Heart left ventricle (tissue), 16 donors: ENCODE measurements at regions of chr10 and their contacts with region 1.

Region 1: GRCh38 chr10:103888113-103888841 is 29.7 kb downstream of the STN1 start:
- DNase-seq: peak; percentile 62 to 87 (median 71)
- ATAC-seq: peak; percentile 55 to 78 (median 68)
- H3K4me3 ChIP-seq: no peak overlapping the region
- H3K27ac ChIP-seq: peak overlapping the region in 9 of 12 donors; percentile 17 to 65 (median 54)
- H3K4me1 ChIP-seq: peaks cover 0 to 42% (median 26%) of the 10 kb centered on the region in 12 donors
- H3K27me3 ChIP-seq: no peaks in the 10 kb centered on the region
- CTCF ChIP-seq: peak; percentile 69 to 92 (median 84)
- POLR2A ChIP-seq: no peak

Region 2: DNA sequence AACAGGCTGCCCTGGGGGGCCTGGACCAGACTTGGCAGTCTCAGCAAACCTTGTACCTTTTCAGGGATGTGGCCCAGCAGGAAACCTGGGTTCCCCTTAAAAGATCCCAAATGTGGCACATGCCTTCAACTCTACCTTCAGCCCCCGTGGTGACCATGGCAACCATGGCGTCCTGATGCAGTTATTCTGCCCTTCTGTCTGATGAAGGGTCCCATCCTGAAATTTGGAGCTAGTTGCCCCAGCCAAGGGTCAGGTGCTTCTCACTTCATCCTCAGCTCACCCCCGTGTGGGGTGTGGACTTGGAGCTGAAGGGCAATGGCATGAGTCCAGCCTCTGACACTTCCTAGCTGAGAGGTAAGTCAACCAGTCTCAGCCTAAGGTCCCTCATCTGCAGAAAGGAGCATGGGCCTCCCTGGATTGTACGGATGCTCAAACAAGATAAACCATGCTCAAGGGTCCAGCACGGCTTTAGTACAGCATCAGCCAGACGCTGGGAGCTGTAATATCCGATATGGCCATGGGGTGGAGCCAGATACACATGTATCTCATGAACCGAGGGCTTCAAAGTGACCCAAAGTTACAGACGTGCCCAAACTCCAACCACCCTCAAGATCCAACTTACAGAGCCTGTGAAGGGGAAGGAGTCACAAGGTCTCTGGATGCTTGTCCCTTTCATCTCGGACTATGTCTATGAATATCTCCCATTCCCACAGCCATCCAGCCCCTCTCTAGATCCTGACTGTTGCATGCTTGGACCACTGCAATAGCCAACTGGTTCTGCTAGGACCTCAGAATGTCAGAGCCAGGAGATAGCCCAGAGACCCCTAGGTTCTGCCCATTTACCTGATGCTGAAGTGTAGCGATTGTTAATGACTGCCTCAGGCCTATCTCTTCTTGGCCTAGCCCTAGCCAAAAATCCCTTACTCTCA is 175.4 kb before region 1 on chr10:
- intact Hi-C with region 1: loop called in 5 of 10 experiments (anchors 1 to 5 kb)
- DNase-seq: peak; percentile 74 to 80 (median 75)
- ATAC-seq: peak; percentile 63 to 80 (median 79)
- H3K4me3 ChIP-seq: no peak overlapping the region
- H3K27ac ChIP-seq: no peak overlapping the region
- H3K4me1 ChIP-seq: peaks cover 0 to 24% (median 0%) of the 10 kb centered on the region in 12 donors
- H3K27me3 ChIP-seq: no peaks in the 10 kb centered on the region
- CTCF ChIP-seq: peak; percentile 78 to 93 (median 89)
- POLR2A ChIP-seq: no peak

Region 3: GRCh38 chr10:103966671-103967447 is 78.6 kb after region 1 on chr10 and contains the start of gene SLK:
- intact Hi-C with region 1: loop called in 4 of 10 experiments (anchors 2 to 5 kb)
- DNase-seq: peak; percentile 87 to 93 (median 89)
- ATAC-seq: peak; percentile 81 to 98 (median 96)
- H3K4me3 ChIP-seq: peak within 1 kb of the TSS; percentile 83 to 99 (median 92)
- H3K27ac ChIP-seq: peak within 1 kb of the TSS; percentile 94 to 99 (median 96)
- H3K4me1 ChIP-seq: peaks cover 0 to 43% (median 33%) of the 10 kb centered on the region in 12 donors
- H3K27me3 ChIP-seq: no peaks in the 10 kb centered on the region
- CTCF ChIP-seq: no peak
- POLR2A ChIP-seq: peak; percentile 65 to 94
- total RNA-seq, gene SLK: 33.0 to 57.8 (median 47.9) TPM

Region 4: DNA sequence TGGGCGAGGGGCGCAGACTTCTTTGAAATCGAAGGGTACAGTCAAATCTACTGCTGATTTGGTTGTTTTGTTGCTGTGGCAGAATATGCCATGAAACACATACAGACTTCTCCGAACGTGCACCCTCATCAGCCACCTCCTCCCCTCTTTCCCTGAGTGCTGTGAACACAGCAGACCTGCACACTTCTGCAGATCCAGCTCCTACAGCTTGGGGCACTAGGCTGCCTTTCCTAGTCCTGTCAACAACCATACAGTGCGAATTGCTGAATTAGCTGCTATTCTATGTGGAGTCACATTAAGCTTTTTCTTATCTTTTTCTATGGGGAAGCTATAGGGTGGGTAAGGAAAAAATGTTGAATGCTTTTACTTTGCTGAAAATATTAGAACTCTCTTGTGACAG is 139.9 kb after region 1 on chr10:
- intact Hi-C with region 1: loop called in 3 of 10 experiments (anchors 10 kb)
- DNase-seq: peak in 2 of 5 donors; percentile 46 to 53
- ATAC-seq: peak; percentile 78 to 87 (median 86)
- H3K4me3 ChIP-seq: no peak overlapping the region
- H3K27ac ChIP-seq: peak overlapping the region; percentile 10 to 86 (median 78)
- H3K4me1 ChIP-seq: peaks cover 0 to 27% (median 18%) of the 10 kb centered on the region in 12 donors
- H3K27me3 ChIP-seq: no peaks in the 10 kb centered on the region
- CTCF ChIP-seq: peak in 11 of 12 donors; percentile 31 to 65 (median 45)
- POLR2A ChIP-seq: no peak

Region 5: GRCh38 chr10:104121520-104122224 is 233.4 kb after region 1 on chr10 and contains the start of gene SFR1:
- intact Hi-C with region 1: loop called (anchors 5 to 10 kb)
- DNase-seq: peak; percentile 98 to 99 (median 99)
- ATAC-seq: peak; percentile 96 to 99 (median 96)
- H3K4me3 ChIP-seq: peak within 1 kb of the TSS; percentile 47 to 87 (median 76)
- H3K27ac ChIP-seq: peak within 1 kb of the TSS; percentile 91 to 99 (median 97)
- H3K4me1 ChIP-seq: peaks cover 0 to 28% (median 9%) of the 10 kb centered on the region in 12 donors
- H3K27me3 ChIP-seq: no peaks in the 10 kb centered on the region
- CTCF ChIP-seq: peak; percentile 39 to 84 (median 64)
- POLR2A ChIP-seq: peak; percentile 43 to 90
- total RNA-seq, gene SFR1: 5.4 to 10.1 (median 7.6) TPM